Caco-2 (cell line): ENCODE measurements at regions of chr2 and their contacts with region 1.

Region 1: DNA sequence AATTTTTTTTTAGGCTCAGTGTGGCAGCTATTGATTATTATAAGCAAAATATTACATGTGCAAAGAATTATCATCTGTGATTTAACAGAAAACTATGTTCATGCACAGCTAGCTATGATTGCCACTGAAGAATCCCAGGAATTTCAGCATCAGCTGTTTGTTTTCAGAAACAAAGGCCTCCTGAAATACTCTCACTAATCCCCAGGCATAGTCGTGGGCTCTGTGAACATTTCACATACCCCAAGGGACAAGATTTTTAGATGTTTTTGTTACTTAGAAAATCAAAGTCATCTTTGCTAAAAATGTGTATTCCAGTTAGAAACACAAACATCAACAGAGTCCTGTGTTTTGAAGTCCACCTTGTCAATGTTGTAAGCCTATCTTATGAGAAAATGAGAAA is 156.1 kb downstream of the MYO1B start:
- DNase-seq: peak in 1 of 2 experiments; percentile 43
- H3K4me3 ChIP-seq: no peak overlapping the region
- H3K4me3 Mint-ChIP-seq: peak overlapping the region; percentile 16
- H3K27ac Mint-ChIP-seq: peak overlapping the region; percentile 44
- H3K4me1 ChIP-seq: peaks cover 71% of the 10 kb centered on the region
- H3K4me1 Mint-ChIP-seq: peaks cover 36% of the 10 kb centered on the region
- H3K27me3 ChIP-seq: no peaks in the 10 kb centered on the region
- H3K27me3 Mint-ChIP-seq: no peaks in the 10 kb centered on the region
- CTCF ChIP-seq: no peak

Region 2: DNA sequence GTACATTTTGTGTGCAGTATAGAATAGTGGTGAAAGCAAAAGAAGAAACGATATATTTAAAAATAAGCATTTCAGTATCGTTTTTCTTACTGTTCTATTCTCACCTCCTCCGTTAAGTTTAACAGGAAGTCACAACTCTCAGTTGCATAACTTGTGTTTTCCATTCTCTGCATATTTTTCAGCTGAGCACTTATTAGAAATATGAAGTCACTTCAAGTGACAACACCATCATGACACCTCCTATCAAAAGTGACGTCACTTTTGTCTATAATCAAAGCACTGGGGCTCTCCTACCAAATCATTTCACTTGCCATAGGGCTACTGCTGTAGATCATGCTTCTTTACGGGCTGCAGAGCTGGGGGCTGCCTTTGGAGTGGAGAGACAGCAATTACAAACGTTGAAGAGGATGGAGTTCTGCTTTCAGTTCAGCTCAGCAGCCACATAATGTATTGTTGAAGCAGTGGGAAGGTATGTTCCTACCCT is 286.8 kb before region 1 on chr2:
- CTCF ChIA-PET with region 1: no interaction called
- POLR2A ChIA-PET with region 1: no interaction called
- intact Hi-C with region 1: no loop called
- DNase-seq: no peak
- H3K4me3 ChIP-seq: no peak overlapping the region
- H3K4me3 Mint-ChIP-seq: no peak overlapping the region
- H3K27ac Mint-ChIP-seq: no peak overlapping the region
- H3K4me1 ChIP-seq: no peaks in the 10 kb centered on the region
- H3K4me1 Mint-ChIP-seq: no peaks in the 10 kb centered on the region
- H3K27me3 ChIP-seq: no peaks in the 10 kb centered on the region
- H3K27me3 Mint-ChIP-seq: peaks cover 22% of the 10 kb centered on the region
- CTCF ChIP-seq: no peak

Region 3: GRCh38 chr2:191382801-191383200 is 18.5 kb before region 1 on chr2:
- CTCF ChIA-PET with region 1: no interaction called
- POLR2A ChIA-PET with region 1: no interaction called
- intact Hi-C with region 1: loop called (anchors 2 kb)
- DNase-seq: peak; percentile 47 to 50
- H3K4me3 ChIP-seq: no peak overlapping the region
- H3K4me3 Mint-ChIP-seq: no peak overlapping the region
- H3K27ac Mint-ChIP-seq: no peak overlapping the region
- H3K4me1 ChIP-seq: peaks cover 17% of the 10 kb centered on the region
- H3K4me1 Mint-ChIP-seq: peaks cover 18% of the 10 kb centered on the region
- H3K27me3 ChIP-seq: no peaks in the 10 kb centered on the region
- H3K27me3 Mint-ChIP-seq: no peaks in the 10 kb centered on the region
- CTCF ChIP-seq: no peak

Region 4: DNA sequence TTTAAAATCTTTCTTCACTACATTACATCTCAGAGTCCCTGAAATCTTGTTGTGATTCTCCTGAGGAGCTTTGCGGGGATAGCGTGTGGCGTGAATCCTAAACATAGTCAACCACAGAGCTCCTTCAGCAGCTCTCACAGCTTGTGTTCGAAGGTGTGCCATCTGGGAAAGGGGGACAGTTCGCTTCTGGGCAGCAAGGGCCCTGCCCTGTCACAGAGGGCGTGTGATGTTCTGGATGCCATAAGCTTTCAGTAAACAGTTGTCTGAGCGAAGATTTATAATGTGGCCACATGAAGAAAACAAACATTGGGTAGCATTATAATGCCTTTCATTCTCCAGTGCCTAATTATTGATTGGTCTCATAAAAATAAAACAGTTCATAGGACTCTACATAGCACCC is 16.5 kb after region 1 on chr2:
- CTCF ChIA-PET with region 1: no interaction called
- POLR2A ChIA-PET with region 1: no interaction called
- intact Hi-C with region 1: loop called (anchors 1 kb)
- DNase-seq: no peak
- H3K4me3 ChIP-seq: no peak overlapping the region
- H3K4me3 Mint-ChIP-seq: no peak overlapping the region
- H3K27ac Mint-ChIP-seq: peak overlapping the region; percentile 23
- H3K4me1 ChIP-seq: peaks cover 20% of the 10 kb centered on the region
- H3K4me1 Mint-ChIP-seq: peaks cover 13% of the 10 kb centered on the region
- H3K27me3 ChIP-seq: no peaks in the 10 kb centered on the region
- H3K27me3 Mint-ChIP-seq: no peaks in the 10 kb centered on the region
- CTCF ChIP-seq: no peak

Region 5: DNA sequence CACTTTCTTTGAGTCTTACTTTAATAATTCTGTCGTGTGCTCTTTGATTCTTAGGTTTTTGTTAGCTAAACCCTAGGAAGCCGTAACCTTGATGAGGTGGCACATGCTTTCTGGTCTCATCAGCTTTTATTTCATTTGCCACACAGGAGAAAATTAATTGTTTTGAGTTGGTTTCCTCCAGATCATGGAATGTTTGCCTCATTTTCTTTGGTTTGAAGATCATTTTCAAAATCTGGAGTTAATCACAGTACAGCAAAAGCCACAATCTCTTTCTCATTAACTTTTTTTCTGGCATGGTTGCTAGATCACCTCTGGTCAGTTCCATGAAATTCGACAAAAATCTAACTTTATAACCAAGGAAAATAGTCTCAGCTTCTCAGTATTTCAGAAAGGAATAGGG is 26.9 kb after region 1 on chr2:
- CTCF ChIA-PET with region 1: no interaction called
- POLR2A ChIA-PET with region 1: no interaction called
- intact Hi-C with region 1: no loop called
- DNase-seq: no peak
- H3K4me3 ChIP-seq: no peak overlapping the region
- H3K4me3 Mint-ChIP-seq: no peak overlapping the region
- H3K27ac Mint-ChIP-seq: no peak overlapping the region
- H3K4me1 ChIP-seq: no peaks in the 10 kb centered on the region
- H3K4me1 Mint-ChIP-seq: no peaks in the 10 kb centered on the region
- H3K27me3 ChIP-seq: no peaks in the 10 kb centered on the region
- H3K27me3 Mint-ChIP-seq: no peaks in the 10 kb centered on the region
- CTCF ChIP-seq: no peak

Region 6: GRCh38 chr2:191446910-191447309 is 45.6 kb after region 1 on chr2:
- CTCF ChIA-PET with region 1: no interaction called
- POLR2A ChIA-PET with region 1: no interaction called
- intact Hi-C with region 1: loop called (anchors 5 kb)
- DNase-seq: peak in 1 of 2 experiments; percentile 26
- H3K4me3 ChIP-seq: no peak overlapping the region
- H3K4me3 Mint-ChIP-seq: no peak overlapping the region
- H3K27ac Mint-ChIP-seq: peak overlapping the region; percentile 20
- H3K4me1 ChIP-seq: peaks cover 20% of the 10 kb centered on the region
- H3K4me1 Mint-ChIP-seq: peaks cover 21% of the 10 kb centered on the region
- H3K27me3 ChIP-seq: no peaks in the 10 kb centered on the region
- H3K27me3 Mint-ChIP-seq: no peaks in the 10 kb centered on the region
- CTCF ChIP-seq: no peak